ENCODE measurements at regions of chr11 and their contacts with region 1.

Region 1: DNA sequence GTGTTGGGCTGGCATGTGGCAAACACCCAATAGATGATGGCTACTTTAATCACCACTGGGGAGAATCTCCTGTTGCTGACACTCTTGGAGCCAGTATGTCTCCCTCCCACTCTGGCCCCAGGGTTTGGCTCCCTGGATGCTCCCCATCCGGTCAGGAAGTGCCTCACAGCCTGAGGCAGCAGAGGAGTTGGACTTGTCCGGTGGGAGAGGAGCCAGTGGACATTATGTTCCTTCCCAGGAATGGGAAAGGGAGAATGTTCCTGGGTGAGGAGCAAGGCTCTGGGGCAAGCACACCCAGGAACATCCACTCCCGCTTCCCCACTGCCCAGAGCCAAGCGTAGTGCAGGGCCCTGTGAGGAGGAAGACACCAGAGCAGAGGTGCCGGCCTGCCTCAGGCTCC is 84.6 kb upstream of the NAV2 start:
- DNase-seq: peak; percentile 85 to 90
- ATAC-seq: peak; percentile 88
- H3K4me3 ChIP-seq: no peak overlapping the region
- H3K27ac ChIP-seq: peak overlapping the region; percentile 47 to 83
- H3K4me1 ChIP-seq: peaks cover 4 to 7% of the 10 kb centered on the region in 2 donors
- H3K27me3 ChIP-seq: no peaks in the 10 kb centered on the region

Region 2: GRCh38 chr11:19557720-19558140 is 70.3 kb before region 1 on chr11:
- intact Hi-C with region 1: no loop called
- DNase-seq: peak; percentile 86 to 96
- ATAC-seq: peak; percentile 80
- H3K4me3 ChIP-seq: no peak overlapping the region
- H3K27ac ChIP-seq: no peak overlapping the region
- H3K4me1 ChIP-seq: no peaks in the 10 kb centered on the region
- H3K27me3 ChIP-seq: no peaks in the 10 kb centered on the region

Region 3: DNA sequence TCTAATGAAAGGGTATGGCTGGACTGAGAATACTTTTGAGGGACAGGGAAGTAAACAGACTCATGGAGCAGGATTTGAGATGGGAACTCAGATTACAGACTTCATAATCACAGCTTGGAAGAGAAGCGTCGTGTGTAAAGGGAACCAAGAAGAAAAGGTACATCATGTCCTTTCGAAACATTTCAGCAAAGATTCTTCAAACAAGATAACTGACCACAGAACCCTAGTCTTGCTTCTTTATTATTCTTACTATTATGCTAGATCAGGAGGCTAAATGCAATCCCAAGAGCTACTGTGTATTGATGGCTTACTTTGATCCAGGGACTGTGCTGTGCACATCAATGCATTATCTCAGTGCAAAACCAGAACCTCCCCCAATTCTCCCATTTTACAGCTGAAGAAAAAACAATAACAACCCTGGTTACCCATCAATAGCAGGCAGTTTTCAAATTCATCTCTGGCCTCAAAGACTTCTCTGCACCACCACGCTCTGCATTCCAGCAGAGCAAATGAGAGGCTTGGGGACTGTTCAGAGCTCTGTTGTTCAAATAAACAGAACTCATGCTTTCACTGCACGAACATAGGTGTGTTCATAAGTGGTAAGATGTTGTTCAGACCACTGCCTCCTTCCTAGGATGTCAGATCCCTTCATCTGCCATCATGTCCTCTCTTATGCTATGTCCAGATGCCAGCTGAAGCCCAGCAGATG is 20.2 kb before region 1 on chr11:
- intact Hi-C with region 1: loop called in 1 of 2 experiments (anchors 1 kb)
- DNase-seq: no peak
- ATAC-seq: no peak
- H3K4me3 ChIP-seq: no peak overlapping the region
- H3K27ac ChIP-seq: no peak overlapping the region
- H3K4me1 ChIP-seq: peaks cover 4 to 10% of the 10 kb centered on the region in 2 donors
- H3K27me3 ChIP-seq: no peaks in the 10 kb centered on the region

Measured in aorta (tissue), 5 donors.